WTC11 (cell line): ENCODE measurements at regions of chr1 and their contacts with region 1.

Region 1: DNA sequence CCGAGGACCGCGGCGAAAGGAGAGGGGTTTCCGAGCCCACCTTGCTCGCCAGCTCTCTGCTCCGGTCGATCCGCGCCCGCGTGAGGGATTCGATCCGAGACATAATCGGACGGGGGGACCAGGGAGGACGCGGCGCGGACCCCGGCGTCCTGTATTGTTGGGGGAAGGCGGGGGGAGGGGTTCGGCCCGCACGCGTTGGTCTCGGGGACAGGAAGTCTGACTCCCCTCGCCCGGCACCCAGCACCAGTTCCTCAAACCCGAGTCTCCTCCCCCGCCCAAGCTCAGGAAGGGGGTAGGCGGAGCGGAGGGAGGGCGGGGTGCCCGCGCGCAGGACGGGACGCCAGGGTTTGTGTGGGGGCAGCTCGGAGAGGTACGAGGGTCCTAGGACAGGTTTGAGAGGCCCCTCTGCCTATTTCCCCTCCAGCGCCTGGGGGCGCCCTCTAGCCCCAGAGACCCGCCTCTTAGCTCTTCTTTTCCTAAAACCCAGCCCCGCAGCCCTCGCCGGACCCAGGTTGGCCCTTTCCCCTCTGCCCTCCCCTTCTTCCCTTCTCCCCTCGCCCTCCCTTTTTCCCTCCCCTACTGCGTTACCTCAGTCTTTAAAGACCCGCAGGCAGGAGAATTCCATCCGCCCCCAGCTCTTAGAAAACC is at the start of gene ARHGEF2:
- DNase-seq: peak; percentile 91
- ATAC-seq: peak; percentile 75
- H3K4me3 Mint-ChIP-seq: peak within 1 kb of the TSS; percentile 95
- H3K27ac Mint-ChIP-seq: peak within 1 kb of the TSS; percentile 95
- H3K4me1 Mint-ChIP-seq: peaks cover 78% of the 10 kb centered on the region
- H3K27me3 Mint-ChIP-seq: no peaks in the 10 kb centered on the region
- CTCF ChIP-seq: no peak
- total RNA-seq, gene ARHGEF2: 60.0 to 69.5 TPM (median 66.2 TPM) in 3 replicates

Region 2: GRCh38 chr1:155934097-155934935 is 44.1 kb before region 1 on chr1 and contains the start of gene KHDC4:
- CTCF ChIA-PET with region 1: interaction called, 29 read pairs
- POLR2A ChIA-PET with region 1: interaction called, 9 read pairs
- DNase-seq: peak; percentile 88
- ATAC-seq: peak; percentile 92
- H3K4me3 Mint-ChIP-seq: no peak within 1 kb of the TSS
- H3K27ac Mint-ChIP-seq: no peak within 1 kb of the TSS
- H3K4me1 Mint-ChIP-seq: peaks cover 20% of the 10 kb centered on the region
- H3K27me3 Mint-ChIP-seq: no peaks in the 10 kb centered on the region
- CTCF ChIP-seq: no peak
- total RNA-seq, gene KHDC4: 46.0 to 64.4 TPM (median 59.8 TPM) in 3 replicates

Region 3: DNA sequence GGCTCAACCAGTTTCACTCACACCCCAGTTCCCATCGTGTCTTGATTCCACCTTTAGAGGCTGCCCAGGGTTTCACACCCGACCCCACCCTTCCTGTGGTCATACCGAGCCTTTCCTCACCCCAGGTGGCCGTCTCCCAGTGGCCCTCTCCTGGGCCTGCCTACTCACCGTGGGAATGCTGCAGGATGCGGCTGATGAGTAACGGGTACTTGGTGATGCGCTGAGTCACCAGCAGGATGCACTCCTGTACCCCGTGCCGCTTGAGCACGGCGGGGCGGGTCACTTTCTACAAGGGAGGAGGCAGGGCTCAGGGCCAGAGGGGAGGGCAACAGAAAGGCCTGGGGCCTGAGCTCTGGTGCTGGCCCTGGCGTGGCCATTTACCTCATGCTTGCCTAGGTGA is 16.5 kb before region 1 on chr1:
- CTCF ChIA-PET with region 1: interaction called, 62 read pairs
- POLR2A ChIA-PET with region 1: interaction called, 40 read pairs
- DNase-seq: no peak
- ATAC-seq: peak; percentile 63
- H3K4me3 Mint-ChIP-seq: no peak overlapping the region
- H3K27ac Mint-ChIP-seq: peak overlapping the region; percentile 82
- H3K4me1 Mint-ChIP-seq: peaks cover 6% of the 10 kb centered on the region
- H3K27me3 Mint-ChIP-seq: no peaks in the 10 kb centered on the region
- CTCF ChIP-seq: no peak

Region 4: GRCh38 chr1:156012051-156012817 is 33.8 kb after region 1 on chr1:
- CTCF ChIA-PET with region 1: interaction called, 10 read pairs
- POLR2A ChIA-PET with region 1: no interaction called
- DNase-seq: no peak
- ATAC-seq: no peak
- H3K4me3 Mint-ChIP-seq: no peak overlapping the region
- H3K27ac Mint-ChIP-seq: no peak overlapping the region
- H3K4me1 Mint-ChIP-seq: no peaks in the 10 kb centered on the region
- H3K27me3 Mint-ChIP-seq: no peaks in the 10 kb centered on the region
- CTCF ChIP-seq: no peak

Region 5: GRCh38 chr1:156054500-156055280 is 76.2 kb after region 1 on chr1 and contains the start of gene LAMTOR2:
- CTCF ChIA-PET with region 1: interaction called, 11 read pairs
- POLR2A ChIA-PET with region 1: interaction called, 3 read pairs
- DNase-seq: peak; percentile 99
- ATAC-seq: peak; percentile 69
- H3K4me3 Mint-ChIP-seq: peak within 1 kb of the TSS; percentile 98
- H3K27ac Mint-ChIP-seq: peak within 1 kb of the TSS; percentile 97
- H3K4me1 Mint-ChIP-seq: peaks cover 15% of the 10 kb centered on the region
- H3K27me3 Mint-ChIP-seq: no peaks in the 10 kb centered on the region
- CTCF ChIP-seq: no peak
- total RNA-seq, gene LAMTOR2: 62.4 to 75.7 TPM (median 73.8 TPM) in 3 replicates

Region 6: GRCh38 chr1:156082309-156083091 is 104.1 kb after region 1 on chr1 and contains the start of gene MEX3A:
- CTCF ChIA-PET with region 1: interaction called, 4 read pairs
- POLR2A ChIA-PET with region 1: interaction called, 11 read pairs
- DNase-seq: peak; percentile 99
- ATAC-seq: peak; percentile 73
- H3K4me3 Mint-ChIP-seq: peak within 1 kb of the TSS; percentile 97
- H3K27ac Mint-ChIP-seq: peak within 1 kb of the TSS; percentile 93
- H3K4me1 Mint-ChIP-seq: peaks cover 65% of the 10 kb centered on the region
- H3K27me3 Mint-ChIP-seq: no peaks in the 10 kb centered on the region
- CTCF ChIP-seq: no peak
- total RNA-seq, gene MEX3A: 66.3 to 79.1 TPM (median 70.6 TPM) in 3 replicates